ENCODE measurements at regions of chr13 and their contacts with region 1.

Region 1: DNA sequence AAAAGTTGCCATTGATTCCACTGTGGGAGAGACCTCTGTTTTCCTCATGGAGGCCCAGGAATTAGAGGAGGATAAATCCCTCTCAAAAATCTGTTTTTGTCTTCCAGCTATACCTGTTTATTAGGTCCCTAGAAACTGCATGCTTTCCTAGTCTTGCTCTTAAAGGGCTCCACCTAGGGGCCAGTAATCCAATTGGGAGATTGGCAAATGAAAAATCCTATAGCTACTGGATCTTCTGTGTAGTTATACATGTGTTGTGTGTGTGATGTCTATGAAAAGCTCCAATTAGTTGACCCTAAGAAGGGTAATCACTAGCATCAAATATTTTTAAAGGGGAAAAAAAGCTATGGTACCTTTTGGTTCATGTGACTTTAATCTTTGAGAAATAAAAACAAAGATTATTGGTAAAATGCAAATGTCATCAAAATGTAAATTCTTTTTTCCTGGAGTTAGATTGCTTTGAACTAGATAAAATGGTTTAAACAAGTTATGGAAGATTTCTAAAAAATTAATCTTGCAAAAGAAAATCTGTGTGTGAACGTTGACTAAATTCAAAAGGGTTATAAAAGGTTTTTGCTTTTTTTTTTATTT is 63.4 kb upstream of the C1QTNF9B start:
- H3K4me3 ChIP-seq: no peak overlapping the region
- H3K27ac ChIP-seq: no peak overlapping the region
- H3K4me1 ChIP-seq: no peaks in the 10 kb centered on the region; the same call in 1 of the 2 replicates
- CTCF ChIP-seq: no peak

Region 2: GRCh38 chr13:23921451-23921888 is 39.2 kb before region 1 on chr13:
- CTCF ChIA-PET with region 1: interaction called, 20 read pairs
- POLR2A ChIA-PET with region 1: no interaction called
- H3K4me3 ChIP-seq: no peak overlapping the region
- H3K27ac ChIP-seq: no peak overlapping the region
- H3K4me1 ChIP-seq: no peaks in the 10 kb centered on the region
- CTCF ChIP-seq: no peak